ENCODE measurements at regions of chr9 and their contacts with region 1.

Region 1: GRCh38 chr9:27033823-27034403 is 28.4 kb upstream of the LRRC19 start:
- DNase-seq: peak; percentile 49
- H3K4me3 Mint-ChIP-seq: no peak overlapping the region
- H3K27ac Mint-ChIP-seq: no peak overlapping the region
- H3K4me1 Mint-ChIP-seq: no peaks in the 10 kb centered on the region
- H3K27me3 Mint-ChIP-seq: no peaks in the 10 kb centered on the region
- CTCF ChIP-seq: peak; percentile 28

Region 2: GRCh38 chr9:26856413-26857032 is 177.4 kb before region 1 on chr9:
- CTCF ChIA-PET with region 1: no interaction called
- intact Hi-C with region 1: no loop called
- DNase-seq: peak; percentile 36
- H3K4me3 Mint-ChIP-seq: no peak overlapping the region
- H3K27ac Mint-ChIP-seq: no peak overlapping the region
- H3K4me1 Mint-ChIP-seq: no peaks in the 10 kb centered on the region
- H3K27me3 Mint-ChIP-seq: no peaks in the 10 kb centered on the region
- CTCF ChIP-seq: peak; percentile 26

Region 3: GRCh38 chr9:27194401-27195091 is 160.6 kb after region 1 on chr9:
- CTCF ChIA-PET with region 1: no interaction called
- intact Hi-C with region 1: loop called (anchors 5 kb)
- DNase-seq: no peak
- H3K4me3 Mint-ChIP-seq: no peak overlapping the region
- H3K27ac Mint-ChIP-seq: no peak overlapping the region
- H3K4me1 Mint-ChIP-seq: no peaks in the 10 kb centered on the region
- H3K27me3 Mint-ChIP-seq: peaks cover 1% of the 10 kb centered on the region
- CTCF ChIP-seq: no peak

Region 4: DNA sequence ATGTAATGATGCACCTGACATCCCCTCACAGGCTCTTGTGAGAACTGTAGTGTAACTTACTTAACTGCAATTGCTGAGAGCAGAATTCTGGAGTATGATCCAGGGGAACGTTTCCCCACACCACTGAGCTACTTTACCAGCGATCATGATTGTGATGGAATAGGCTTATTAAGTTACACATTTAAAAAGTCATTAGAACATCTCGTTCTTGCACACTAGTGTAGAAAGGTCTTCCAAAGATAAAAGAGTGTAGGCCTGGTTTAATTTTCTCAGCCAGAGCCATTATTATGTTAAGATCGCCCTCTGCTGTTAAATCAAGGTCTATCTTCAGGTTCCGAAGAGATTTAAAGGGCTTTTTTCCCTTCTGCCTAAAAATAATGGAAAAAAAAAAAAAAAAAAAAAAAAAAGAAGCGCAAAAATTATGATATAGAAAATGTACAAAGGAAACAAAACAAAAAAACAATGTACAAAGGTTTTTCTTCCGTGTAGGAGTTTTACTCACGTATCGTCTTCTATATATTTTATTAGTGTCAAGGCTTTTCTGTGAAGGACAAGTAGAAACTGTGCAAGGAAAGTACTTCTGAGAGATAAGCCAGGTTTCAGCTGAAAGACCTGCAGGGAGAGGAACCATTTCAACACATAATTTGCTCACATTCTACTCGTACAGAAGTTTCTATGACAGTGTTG is 514.3 kb after region 1 on chr9:
- CTCF ChIA-PET with region 1: no interaction called
- intact Hi-C with region 1: loop called (anchors 5 kb)
- DNase-seq: no peak
- H3K4me3 Mint-ChIP-seq: no peak overlapping the region
- H3K27ac Mint-ChIP-seq: no peak overlapping the region
- H3K4me1 Mint-ChIP-seq: no peaks in the 10 kb centered on the region
- H3K27me3 Mint-ChIP-seq: no peaks in the 10 kb centered on the region
- CTCF ChIP-seq: no peak

Measured in Calu3 (cell line).